AG04449 (cell line): ENCODE measurements at regions of chr5 and their contacts with region 1.

Region 1: DNA sequence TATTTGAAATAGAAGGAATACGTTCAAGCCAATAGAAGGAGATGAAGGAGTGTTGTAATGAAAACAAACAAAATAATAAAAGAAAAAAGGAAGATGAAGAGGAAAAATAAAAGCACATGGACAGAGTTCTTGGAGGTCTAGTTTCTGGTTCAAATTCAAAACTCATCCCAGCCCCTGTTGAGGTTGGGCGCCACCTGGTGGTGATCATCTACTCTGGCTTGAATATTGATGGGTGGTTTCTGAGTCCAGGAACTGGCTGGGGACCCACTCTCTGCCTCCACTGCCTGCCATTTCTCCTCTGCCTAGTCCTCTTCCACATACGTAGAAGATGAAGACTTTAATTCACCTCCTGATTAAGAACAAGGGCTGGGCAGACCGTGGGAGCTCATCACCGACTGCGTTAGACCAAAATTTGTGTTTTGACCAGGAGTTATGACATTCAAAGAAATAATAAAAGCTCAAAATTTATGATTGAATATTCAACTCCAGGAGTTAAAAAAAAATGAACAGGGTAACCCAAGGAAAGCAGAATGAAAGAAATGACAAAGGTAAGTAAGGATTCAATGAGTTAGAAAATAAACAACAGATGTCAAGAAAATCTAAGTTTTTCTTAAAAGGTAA is 99.0 kb upstream of the SLC1A3 start:
- DNase-seq: peak; percentile 9
- H3K4me3 ChIP-seq: no peak overlapping the region
- CTCF ChIP-seq: peak; percentile 82

Region 2: DNA sequence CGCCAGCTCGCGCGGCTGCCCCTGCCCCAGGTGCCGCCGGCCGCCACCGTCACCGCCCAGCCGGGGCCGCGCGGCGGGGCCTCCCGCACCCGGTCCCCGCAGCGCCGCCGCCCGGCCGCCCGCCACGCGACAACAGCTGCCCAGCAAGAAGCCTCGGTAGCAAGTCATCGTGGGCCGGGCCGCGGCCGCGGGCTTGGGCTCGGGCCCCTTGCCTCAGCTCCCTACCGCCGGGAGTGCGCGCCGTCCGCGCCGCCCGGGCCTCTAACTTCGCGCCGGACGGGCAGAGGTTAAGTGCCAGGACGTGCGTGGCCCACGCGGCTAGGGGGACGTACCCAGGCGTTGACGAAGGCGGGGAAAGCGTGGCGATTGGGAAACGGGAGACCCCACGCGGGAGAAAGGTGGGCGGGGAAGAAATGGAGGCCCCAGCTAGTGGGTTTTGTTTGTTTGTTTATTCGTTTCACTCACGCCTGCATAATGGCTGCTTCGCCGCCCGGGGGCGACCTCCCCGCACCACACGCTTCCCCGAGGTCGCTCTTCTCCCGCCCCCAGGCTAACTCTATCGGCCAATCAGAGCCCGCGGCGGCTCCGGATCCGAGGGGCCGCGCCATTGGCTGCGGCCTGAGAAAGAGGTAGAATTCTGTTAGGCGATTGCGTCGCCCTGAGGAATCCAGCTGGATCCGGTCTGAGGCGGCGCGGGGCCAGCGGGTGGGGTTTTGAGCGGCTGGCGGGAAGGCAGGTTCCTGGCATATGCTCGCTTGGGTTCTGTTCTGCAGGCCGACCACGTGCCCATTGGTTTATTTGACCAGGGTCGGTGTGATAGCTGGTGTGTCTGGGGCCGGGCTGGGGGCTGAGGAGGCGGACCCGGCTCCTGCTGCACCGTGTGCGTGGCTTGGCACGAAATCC is 265.6 kb before region 1 on chr5 and contains the start of gene NADK2:
- CTCF ChIA-PET with region 1: interaction called, 15 read pairs
- POLR2A ChIA-PET with region 1: no interaction called
- DNase-seq: peak; percentile 71
- H3K4me3 ChIP-seq: peak within 1 kb of the TSS; percentile 78
- CTCF ChIP-seq: peak; percentile 68

Region 3: DNA sequence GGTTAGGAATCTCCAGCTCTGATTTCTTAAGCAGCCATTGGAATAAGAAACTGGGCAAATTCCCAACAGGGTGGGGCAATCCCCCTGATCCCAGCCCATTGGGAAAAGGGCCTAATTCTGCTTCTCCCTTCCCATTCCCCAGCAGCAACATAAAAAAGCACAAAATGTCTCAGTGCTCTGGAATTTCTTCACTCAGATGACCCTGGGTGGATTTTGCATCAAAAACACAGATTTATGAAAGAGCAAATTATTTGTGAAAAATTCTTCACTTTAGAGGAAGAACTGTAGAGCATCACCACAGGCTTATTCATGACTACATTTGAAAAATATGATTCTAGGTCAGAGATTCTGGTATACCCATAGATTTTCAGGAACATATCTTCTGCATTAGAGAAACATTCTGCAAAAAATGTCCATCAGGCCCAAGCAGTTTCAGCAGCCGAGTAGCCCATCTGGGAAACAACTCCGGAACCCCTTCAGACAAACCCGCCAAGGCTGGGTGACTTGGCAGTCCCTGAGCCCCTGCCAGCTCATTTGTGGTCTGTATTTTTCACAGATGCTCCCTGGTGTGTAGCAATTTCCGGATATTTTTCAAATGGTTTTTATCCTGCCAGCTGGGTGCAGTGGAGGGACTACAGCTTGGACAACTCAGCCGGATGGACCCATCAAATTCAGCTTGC is 103.7 kb before region 1 on chr5:
- CTCF ChIA-PET with region 1: interaction called, 12 read pairs
- POLR2A ChIA-PET with region 1: no interaction called
- DNase-seq: peak; percentile 80
- H3K4me3 ChIP-seq: no peak overlapping the region
- CTCF ChIP-seq: no peak

Region 4: GRCh38 chr5:36414869-36415282 is 92.6 kb before region 1 on chr5:
- CTCF ChIA-PET with region 1: interaction called, 245 read pairs
- POLR2A ChIA-PET with region 1: no interaction called
- DNase-seq: no peak
- H3K4me3 ChIP-seq: no peak overlapping the region
- CTCF ChIP-seq: peak; percentile 20

Region 5: DNA sequence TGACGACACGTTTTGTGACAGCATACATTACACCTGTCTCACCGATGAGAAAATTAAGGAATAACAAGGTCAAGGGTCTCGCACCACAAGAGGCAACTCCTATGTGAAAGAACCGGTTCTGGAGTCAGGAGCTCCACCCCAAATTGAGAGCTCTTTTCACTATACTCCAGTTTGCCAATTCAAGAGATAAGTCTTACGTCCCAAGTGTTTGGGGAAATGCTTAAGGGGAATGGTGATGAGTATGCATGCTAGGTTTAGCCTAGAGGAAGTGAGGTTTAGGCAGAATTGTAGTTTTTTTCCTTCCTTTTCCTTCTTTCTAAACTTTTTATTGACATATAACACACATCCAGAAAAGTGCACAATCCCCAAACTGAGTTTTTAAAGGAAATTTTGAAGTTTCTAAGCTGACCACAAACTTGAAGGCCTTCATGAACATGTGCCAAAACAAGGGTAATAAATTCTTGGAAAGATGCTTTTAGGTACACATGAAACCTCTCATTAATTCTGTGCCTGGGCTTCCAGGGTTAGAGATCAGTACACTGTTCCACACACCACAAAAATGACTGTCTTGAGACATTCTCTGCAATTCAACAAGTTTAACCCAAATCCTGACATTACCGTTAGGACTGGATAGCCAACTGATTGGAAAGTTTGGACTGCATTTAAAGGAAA is 28.7 kb before region 1 on chr5:
- CTCF ChIA-PET with region 1: interaction called, 11 read pairs
- POLR2A ChIA-PET with region 1: no interaction called
- DNase-seq: no peak
- H3K4me3 ChIP-seq: no peak overlapping the region
- CTCF ChIP-seq: no peak

Region 6: DNA sequence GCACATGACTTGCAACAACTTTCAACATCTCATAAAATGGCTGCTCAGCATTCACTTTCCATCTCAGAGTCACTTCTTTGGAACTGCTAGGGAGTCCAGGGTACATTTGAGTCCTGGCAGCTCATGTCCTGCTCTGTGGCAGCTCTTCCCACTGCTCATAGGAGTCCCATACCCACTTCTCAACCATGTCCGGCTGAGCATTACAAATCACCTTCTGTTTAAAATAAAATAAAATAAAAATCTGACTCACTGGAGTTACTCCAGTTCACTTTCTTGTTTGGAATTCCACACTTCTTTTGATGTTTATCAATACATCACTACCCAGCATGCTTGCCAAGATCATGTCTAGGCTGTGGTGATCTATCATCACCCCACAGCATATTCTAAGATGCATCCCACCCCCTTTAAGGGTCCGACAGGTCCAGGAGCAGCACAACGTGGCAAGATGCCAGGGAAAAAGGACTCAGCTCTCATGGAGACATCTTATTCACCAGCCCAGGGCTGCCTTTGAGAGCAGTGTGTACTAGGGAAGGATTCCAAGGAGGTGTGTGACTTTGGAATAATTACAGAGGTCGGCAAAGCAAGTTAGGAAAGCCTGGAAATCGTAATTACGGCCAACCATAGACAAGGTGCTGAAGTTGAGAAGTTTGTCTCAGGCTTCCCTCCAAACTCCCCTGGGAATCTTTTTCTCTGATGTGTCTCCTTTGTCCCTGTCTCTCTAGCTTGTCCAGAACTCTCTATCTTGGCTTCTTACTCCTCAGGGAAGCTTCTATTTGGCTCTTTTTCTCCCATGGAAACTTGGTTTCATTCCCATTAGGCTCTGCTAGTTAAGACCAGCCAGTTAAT is 12.5 kb before region 1 on chr5:
- CTCF ChIA-PET with region 1: interaction called, 70 read pairs
- POLR2A ChIA-PET with region 1: no interaction called
- DNase-seq: no peak
- H3K4me3 ChIP-seq: no peak overlapping the region
- CTCF ChIP-seq: no peak

Region 7: GRCh38 chr5:36521838-36522745 is 14.7 kb after region 1 on chr5:
- CTCF ChIA-PET with region 1: interaction called, 17 read pairs
- POLR2A ChIA-PET with region 1: no interaction called
- DNase-seq: no peak
- H3K4me3 ChIP-seq: no peak overlapping the region
- CTCF ChIP-seq: no peak

Region 8: GRCh38 chr5:37005252-37005651 is 497.8 kb after region 1 on chr5:
- CTCF ChIA-PET with region 1: no interaction called
- POLR2A ChIA-PET with region 1: no interaction called
- DNase-seq: no peak
- H3K4me3 ChIP-seq: no peak overlapping the region
- CTCF ChIP-seq: no peak